Activated B cell treated with CpG ODN at 0.5 μM for 24 hours (primary cell): ENCODE measurements at regions of chr3 and their contacts with region 1.

Region 1: DNA sequence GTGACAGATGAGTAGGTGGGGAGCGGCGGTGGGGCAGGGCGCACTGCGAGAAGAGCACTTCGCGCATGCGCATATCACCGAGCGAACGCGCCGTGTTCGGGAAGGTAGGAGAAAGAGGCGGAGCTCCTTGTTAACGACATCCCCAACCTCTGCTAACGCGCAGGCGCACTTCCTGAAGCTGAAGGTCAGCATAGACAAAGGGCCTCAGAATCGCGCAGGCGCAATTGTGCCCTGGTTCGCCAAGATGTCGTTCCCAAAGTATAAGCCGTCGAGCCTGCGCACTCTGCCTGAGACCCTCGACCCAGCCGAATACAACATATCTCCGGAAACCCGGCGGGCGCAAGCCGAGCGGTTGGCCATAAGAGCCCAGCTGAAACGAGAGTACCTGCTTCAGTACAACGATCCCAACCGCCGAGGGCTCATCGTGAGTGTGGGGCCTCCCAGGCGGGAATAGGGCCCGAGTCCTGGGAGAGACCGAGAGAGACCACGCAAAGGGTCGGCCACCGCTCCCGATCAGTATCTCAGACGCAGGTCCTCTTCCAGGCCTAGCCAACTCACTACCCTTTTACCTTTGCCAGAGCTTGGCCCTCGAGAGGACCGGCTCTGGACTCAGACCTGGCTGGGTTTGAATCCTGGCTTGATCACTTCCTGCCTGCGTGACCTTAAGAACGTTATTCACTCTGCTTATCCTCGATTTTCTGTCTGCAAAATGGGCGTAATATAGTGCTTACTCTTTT is at the start of gene NDUFB4:
- DNase-seq: peak; percentile 82
- ATAC-seq: peak; percentile 96
- H3K4me3 Mint-ChIP-seq: peak within 1 kb of the TSS; percentile 96
- H3K27ac Mint-ChIP-seq: peak within 1 kb of the TSS; percentile 94
- H3K4me1 Mint-ChIP-seq: peaks cover 11% of the 10 kb centered on the region
- H3K27me3 Mint-ChIP-seq: peaks cover 2% of the 10 kb centered on the region
- CTCF ChIP-seq: no peak
- total RNA-seq, gene NDUFB4: 80.4 and 86.3 TPM in 2 replicates

Region 2: GRCh38 chr3:120417272-120417911 is 178.9 kb before region 1 on chr3:
- CTCF ChIA-PET with region 1: no interaction called
- POLR2A ChIA-PET with region 1: no interaction called
- intact Hi-C with region 1: loop called (anchors 5 kb)
- DNase-seq: peak; percentile 61
- ATAC-seq: peak; percentile 100
- H3K4me3 Mint-ChIP-seq: peak overlapping the region; percentile 83
- H3K27ac Mint-ChIP-seq: peak overlapping the region; percentile 37
- H3K4me1 Mint-ChIP-seq: peaks cover 16% of the 10 kb centered on the region
- H3K27me3 Mint-ChIP-seq: no peaks in the 10 kb centered on the region
- CTCF ChIP-seq: no peak

Region 3: DNA sequence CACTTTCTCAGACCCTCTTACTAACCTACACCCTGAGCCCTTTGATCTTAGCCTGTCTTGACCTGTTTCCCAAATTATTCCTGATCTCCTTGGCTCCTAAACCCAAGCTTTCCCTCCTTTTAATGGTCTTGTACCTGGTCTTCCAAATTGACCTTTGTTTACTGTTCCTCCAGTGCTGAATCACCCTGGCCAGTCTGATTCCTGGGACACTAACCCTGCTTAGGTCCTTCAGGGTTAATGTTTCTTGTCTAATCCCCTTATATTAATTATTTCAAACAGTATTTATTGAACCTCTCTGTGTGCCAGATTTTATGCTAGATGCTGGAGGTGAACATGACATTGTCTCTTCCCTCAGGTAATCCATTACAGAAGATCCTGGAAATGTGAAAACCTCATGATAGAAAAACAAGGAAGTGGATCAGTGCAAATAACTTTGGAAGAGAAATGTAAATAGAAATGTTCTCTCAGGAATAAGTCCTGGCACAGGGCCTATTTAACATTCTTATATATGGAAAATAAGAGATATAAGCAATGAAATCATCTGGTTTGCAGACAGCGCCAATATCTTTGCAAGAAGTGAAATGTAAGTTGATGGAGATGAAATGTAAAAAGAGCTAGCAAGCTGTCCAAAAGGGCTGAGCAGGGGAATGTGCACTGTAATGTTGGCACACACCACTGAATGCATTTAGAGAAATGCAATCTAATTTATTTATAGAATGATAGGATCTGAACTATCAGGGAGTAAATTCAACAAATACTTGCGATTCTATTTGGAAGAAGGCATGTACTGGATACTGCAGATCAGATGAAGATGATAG is 65.0 kb after region 1 on chr3:
- CTCF ChIA-PET with region 1: no interaction called
- POLR2A ChIA-PET with region 1: no interaction called
- intact Hi-C with region 1: no loop called
- DNase-seq: no peak
- ATAC-seq: no peak
- H3K4me3 Mint-ChIP-seq: no peak overlapping the region
- H3K27ac Mint-ChIP-seq: no peak overlapping the region
- H3K4me1 Mint-ChIP-seq: peaks cover 4% of the 10 kb centered on the region
- H3K27me3 Mint-ChIP-seq: peaks cover 19% of the 10 kb centered on the region
- CTCF ChIP-seq: no peak

Region 4: DNA sequence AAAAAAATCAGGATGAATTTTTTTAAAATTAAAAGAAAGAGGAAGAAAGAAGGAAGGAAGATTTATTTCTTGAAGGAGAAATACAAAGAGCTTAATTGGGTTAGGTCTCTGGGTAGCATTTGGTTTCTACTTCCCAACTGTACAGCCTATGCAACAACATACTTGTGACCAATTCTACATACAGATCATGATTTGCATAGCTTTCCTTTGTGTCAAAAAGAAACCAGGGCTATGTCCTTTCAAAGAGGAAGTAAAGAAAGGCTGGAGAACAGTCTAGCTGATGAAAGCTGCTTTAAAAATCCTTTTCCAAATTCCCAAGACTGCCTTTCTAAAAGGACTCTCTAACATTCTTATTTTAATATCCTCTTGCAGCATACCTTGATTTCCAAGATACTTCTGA is 91.8 kb after region 1 on chr3:
- CTCF ChIA-PET with region 1: no interaction called
- POLR2A ChIA-PET with region 1: interaction called, 3 read pairs
- intact Hi-C with region 1: loop called (anchors 5 kb)
- DNase-seq: no peak
- ATAC-seq: peak; percentile 79
- H3K4me3 Mint-ChIP-seq: no peak overlapping the region
- H3K27ac Mint-ChIP-seq: no peak overlapping the region
- H3K4me1 Mint-ChIP-seq: peaks cover 18% of the 10 kb centered on the region
- H3K27me3 Mint-ChIP-seq: no peaks in the 10 kb centered on the region
- CTCF ChIP-seq: no peak

Region 5: DNA sequence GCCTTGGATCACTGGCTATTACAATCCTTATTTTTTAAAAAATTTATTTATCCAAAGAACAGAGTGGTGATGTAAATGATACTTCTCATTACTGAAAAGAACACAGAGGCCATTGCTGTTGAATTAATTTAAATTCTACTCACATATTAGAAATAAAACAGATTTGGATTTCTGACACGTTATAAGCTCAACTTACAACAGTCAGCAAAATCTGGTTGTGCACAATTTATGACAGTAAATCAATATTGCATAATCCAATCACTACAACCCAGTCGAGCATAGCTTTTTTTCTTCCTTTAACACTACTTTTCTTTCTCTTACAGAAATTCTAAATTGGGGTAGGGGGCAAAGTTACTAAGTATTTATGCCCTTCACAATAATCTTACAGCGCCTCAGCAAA is 103.0 kb after region 1 on chr3:
- CTCF ChIA-PET with region 1: no interaction called
- POLR2A ChIA-PET with region 1: no interaction called
- intact Hi-C with region 1: no loop called
- DNase-seq: no peak
- ATAC-seq: no peak
- H3K4me3 Mint-ChIP-seq: no peak overlapping the region
- H3K27ac Mint-ChIP-seq: no peak overlapping the region
- H3K4me1 Mint-ChIP-seq: no peaks in the 10 kb centered on the region
- H3K27me3 Mint-ChIP-seq: no peaks in the 10 kb centered on the region
- CTCF ChIP-seq: no peak